ENCODE measurements at regions of chr15 and their contacts with region 1.

Region 1: GRCh38 chr15:75493732-75494131 is 42.2 kb upstream of the SIN3A start:
- DNase-seq: no peak
- H3K27ac ChIP-seq: no peak overlapping the region
- CTCF ChIP-seq: no peak

Region 2: DNA sequence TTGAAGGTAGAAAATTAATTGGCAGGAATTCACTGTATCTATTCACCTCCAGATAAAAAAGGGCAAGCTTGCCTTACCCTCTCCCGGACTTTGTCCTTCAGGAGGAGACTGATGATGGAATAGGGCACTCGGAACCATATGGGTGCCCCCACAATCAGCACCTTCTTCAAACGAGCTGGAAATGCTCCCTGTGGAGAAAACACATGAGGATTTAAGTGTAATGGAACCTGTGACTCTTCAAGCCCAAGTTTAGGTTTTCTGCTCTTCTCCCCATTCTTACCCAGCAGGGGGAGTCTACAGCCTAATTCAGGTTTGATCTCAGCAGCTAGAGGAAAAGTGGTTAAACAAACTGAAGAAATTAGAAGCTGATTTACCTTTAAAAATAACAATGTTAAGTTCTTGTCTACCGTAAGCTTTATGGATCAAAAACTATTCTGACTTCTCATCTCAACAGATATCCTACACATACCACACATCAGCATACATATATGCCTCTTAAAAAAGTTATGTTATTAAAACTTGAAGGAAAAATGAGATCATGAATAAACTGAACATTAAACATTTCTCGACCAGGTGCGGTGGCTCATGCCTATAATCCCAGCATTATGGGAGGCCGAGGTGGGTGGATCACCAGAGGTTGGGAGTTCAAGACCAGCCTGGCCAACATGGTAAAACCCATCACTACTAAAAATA is 15.3 kb after region 1 on chr15:
- CTCF ChIA-PET with region 1: interaction called, 10 read pairs
- POLR2A ChIA-PET with region 1: no interaction called
- DNase-seq: peak; percentile 19
- H3K27ac ChIP-seq: peak overlapping the region; percentile 23; the same call in 1 of the 2 replicates
- CTCF ChIP-seq: peak; percentile 65

Measured in RWPE1 (cell line).